ENCODE measurements at regions of chr4 and their contacts with region 1.

Region 1: DNA sequence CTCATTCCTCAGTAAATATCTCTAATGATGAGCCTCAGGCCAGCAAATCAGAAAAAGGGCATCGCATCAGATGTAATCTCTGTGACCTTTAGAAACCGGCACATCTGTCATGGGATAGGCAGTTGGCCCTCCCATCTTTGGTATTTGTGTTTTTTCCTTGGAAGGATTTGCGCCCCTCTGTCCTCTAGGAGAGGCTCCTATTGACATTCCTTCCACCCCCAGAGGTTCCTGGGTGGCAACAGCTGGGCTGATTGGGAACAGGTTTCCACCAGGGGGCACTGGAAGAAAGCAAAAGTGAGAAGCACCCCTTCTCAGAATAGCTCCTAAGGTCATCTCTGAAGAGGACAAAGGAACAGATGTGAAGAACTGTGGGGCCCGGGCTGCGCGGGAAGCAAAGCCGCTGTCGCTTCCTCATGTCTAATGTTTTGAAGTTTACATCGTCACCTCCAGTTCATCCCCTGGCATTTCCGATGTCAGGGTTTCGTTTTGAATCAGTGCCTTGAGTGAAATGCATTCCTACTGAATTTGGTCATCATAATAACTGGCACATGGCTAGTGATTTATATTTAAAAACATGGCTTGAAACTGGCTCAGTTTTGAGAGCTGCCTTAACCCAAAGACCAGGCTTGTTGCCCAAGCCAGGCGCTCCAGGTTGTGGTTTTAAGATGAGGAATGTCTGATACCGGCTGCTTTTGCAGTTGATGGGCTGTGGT is 6.2 kb downstream of the TXK start:
- DNase-seq: peak; percentile 72
- H3K4me3 Mint-ChIP-seq: peak overlapping the region; percentile 3
- H3K27ac Mint-ChIP-seq: peak overlapping the region; percentile 74
- H3K4me1 Mint-ChIP-seq: peaks cover 54% of the 10 kb centered on the region
- H3K27me3 Mint-ChIP-seq: peaks cover 2% of the 10 kb centered on the region

Region 2: GRCh38 chr4:47873877-47874541 is 253.8 kb before region 1 on chr4:
- intact Hi-C with region 1: loop called (anchors 1 kb)
- DNase-seq: no peak
- H3K4me3 Mint-ChIP-seq: no peak overlapping the region
- H3K27ac Mint-ChIP-seq: peak overlapping the region; percentile 66
- H3K4me1 Mint-ChIP-seq: peaks cover 21% of the 10 kb centered on the region
- H3K27me3 Mint-ChIP-seq: no peaks in the 10 kb centered on the region

Region 3: DNA sequence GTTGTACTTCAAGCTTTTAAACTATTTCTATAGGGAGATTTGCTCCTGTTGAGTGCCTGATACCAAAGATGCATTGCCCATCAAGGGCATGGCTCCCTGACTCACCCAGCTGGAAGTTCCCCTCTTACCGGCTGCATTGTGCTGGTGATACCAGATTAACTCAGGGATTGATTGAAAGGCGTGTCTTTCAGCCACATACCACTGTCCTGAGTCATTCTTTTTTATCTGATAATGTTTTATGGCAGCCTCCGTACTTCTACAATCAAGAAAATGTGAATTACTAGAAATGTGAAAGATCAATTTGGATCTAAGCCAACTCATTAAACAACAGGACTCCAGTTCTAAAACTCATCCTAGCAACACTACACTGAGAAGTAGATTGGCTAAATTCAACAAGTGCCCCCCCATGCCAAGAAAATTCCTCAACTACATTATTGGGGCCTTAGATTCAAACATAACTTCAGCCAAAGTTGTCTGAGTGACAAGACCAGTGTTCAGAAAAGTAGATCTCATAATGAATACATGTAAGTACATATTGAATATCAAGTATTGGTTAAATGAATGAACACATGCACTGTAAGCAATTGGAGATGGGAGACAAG is 33.8 kb before region 1 on chr4:
- intact Hi-C with region 1: loop called (anchors 1 kb)
- DNase-seq: no peak
- H3K4me3 Mint-ChIP-seq: no peak overlapping the region
- H3K27ac Mint-ChIP-seq: peak overlapping the region; percentile 7
- H3K4me1 Mint-ChIP-seq: peaks cover 16% of the 10 kb centered on the region
- H3K27me3 Mint-ChIP-seq: peaks cover 4% of the 10 kb centered on the region

Region 4: GRCh38 chr4:48138936-48139335 is 11.1 kb after region 1 on chr4:
- intact Hi-C with region 1: loop called (anchors 1 kb)
- DNase-seq: peak; percentile 24
- H3K4me3 Mint-ChIP-seq: peak overlapping the region; percentile 18
- H3K27ac Mint-ChIP-seq: peak overlapping the region; percentile 83
- H3K4me1 Mint-ChIP-seq: peaks cover 56% of the 10 kb centered on the region
- H3K27me3 Mint-ChIP-seq: no peaks in the 10 kb centered on the region

Region 5: GRCh38 chr4:48212165-48212564 is 84.3 kb after region 1 on chr4:
- intact Hi-C with region 1: no loop called
- DNase-seq: no peak
- H3K4me3 Mint-ChIP-seq: no peak overlapping the region
- H3K27ac Mint-ChIP-seq: no peak overlapping the region
- H3K4me1 Mint-ChIP-seq: peaks cover 22% of the 10 kb centered on the region
- H3K27me3 Mint-ChIP-seq: no peaks in the 10 kb centered on the region

Region 6: GRCh38 chr4:48269861-48270522 is 142.2 kb after region 1 on chr4:
- intact Hi-C with region 1: loop called (anchors 1 kb)
- DNase-seq: peak; percentile 79
- H3K4me3 Mint-ChIP-seq: peak overlapping the region; percentile 93
- H3K27ac Mint-ChIP-seq: peak overlapping the region; percentile 87
- H3K4me1 Mint-ChIP-seq: peaks cover 19% of the 10 kb centered on the region
- H3K27me3 Mint-ChIP-seq: no peaks in the 10 kb centered on the region

Measured in activated T-helper 2 cell treated with anti-CD3 and anti-CD28 coated beads, Interferon-gamma antibody, Interleukin-2, Interleukin-4, amounts not matched to agents 10 μg/mL and 5 μg/mL and 100 μg/mL, durations not matched to agents 14 hours and 24 hours and 36 hours (primary cell).